ENCODE measurements at regions of chr6 and their contacts with region 1.

Region 1: DNA sequence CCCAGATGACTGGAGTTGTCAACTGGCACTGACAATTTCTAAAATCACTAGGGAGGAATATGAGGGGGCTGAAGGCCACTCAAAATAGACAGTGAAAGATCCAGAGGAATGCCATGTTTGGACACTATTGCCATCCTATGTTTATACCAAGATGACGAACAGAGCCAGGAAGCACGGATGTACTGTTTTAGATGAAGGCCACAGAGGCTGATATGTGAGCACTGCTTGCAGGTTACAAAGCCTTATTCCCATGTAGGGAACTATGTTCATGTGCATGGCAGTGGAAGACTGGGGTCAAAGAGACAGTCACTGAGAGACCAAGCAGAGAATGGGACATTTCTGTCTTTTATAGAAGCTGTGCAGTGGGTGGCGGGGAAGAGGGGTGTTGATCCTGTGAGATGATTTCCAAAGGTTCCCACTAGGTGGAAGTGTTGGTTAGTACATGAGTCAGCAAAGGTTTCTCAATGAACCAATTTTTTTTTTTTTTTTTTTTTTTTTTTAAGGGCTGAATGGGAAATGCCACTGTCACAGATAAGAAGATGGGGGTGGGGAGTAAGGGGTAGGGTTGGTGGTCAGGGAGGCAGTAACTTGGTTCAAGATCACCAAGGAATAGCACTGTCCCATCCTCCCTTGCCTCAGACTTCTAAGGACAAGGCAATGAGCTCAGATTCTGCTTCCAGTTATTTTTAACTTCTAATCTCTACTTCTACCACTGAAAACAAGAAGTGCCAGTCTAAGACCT is 46.7 kb upstream of the MOCS1 start:
- DNase-seq: peak; percentile 60

Region 2: DNA sequence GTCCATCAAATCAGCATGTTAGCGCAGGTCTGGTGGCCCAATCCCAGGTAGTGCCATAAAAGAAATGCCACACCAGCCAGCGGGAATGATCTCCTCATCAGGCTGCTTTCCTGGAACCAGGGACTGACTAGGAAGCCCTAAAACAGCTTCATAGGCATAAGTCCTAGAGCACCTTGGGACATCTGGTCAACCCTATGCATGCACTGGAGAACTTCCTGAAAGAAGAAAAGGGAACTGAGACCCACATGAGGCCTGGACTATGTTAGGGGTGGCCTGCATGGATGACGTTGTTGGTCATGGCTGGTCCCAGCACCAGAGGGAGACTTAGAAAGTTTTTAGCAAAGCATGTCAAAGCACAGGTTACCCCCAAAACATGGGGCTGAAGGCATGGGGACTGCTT is 651.0 kb before region 1 on chr6:
- in situ Hi-C with region 1: no loop called
- DNase-seq: peak; percentile 31

Region 3: DNA sequence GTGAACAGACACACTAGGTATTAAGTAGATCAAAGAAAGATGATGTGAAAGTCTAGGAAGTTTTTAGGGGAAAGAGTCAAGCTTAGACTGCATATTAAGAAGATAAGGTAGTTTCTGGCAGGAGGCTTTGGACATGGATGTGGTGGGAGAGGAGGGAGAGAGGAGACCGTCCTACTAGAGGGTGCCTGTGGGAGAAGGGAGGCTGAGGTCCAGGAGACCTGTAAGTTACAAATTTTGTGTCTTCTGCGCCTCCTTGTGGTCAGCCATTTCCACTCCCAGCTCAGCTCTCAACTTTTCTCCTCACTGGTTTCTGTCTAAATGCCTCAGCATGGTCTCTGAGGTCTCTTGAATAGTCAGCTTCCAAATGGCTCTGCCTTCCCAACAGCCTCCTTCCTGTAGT is 864.5 kb after region 1 on chr6:
- in situ Hi-C with region 1: loop called (anchors 25 kb)
- DNase-seq: peak; percentile 59

Measured in KBM-7 (cell line).